Left cardiac atrium (tissue), 4 donors: ENCODE measurements at regions of chr18 and their contacts with region 1.

Region 1: GRCh38 chr18:75209129-75209950 is at the start of gene PTGR3:
- DNase-seq: peak; percentile 91
- ATAC-seq: peak; percentile 76 to 78
- total RNA-seq, gene PTGR3: 33.8 to 51.1 TPM

Region 2: DNA sequence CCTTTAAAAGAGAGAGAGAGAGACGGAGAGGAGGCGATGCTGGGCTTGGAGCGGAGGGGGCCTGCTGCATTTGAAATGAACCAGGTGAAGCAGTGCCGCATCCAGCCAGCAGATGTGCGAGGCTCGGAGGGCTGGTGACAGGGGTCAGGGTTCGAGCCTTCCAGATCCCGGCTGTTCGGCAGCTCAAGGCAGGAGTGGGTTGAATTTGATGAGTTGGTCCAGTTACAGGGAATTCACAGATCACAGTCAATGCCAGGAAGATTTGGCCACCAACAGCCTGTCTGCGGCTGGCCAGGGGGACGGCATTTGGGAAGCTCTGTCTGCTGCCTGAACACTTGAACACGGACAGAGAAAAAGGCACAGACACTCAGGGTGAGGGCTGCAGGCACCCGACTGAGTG is 49.0 kb before region 1 on chr18:
- intact Hi-C with region 1: no loop called
- DNase-seq: no peak
- ATAC-seq: no peak

Region 3: GRCh38 chr18:75249672-75250470 is 40.5 kb after region 1 on chr18:
- intact Hi-C with region 1: loop called in 1 of 2 experiments (anchors 5 kb)
- DNase-seq: no peak
- ATAC-seq: no peak

Region 4: GRCh38 chr18:75478996-75479880 is 269.9 kb after region 1 on chr18:
- intact Hi-C with region 1: loop called in 1 of 2 experiments (anchors 10 kb)
- DNase-seq: no peak
- ATAC-seq: peak; percentile 84